ENCODE measurements at regions of chr14 and their contacts with region 1.

Region 1: DNA sequence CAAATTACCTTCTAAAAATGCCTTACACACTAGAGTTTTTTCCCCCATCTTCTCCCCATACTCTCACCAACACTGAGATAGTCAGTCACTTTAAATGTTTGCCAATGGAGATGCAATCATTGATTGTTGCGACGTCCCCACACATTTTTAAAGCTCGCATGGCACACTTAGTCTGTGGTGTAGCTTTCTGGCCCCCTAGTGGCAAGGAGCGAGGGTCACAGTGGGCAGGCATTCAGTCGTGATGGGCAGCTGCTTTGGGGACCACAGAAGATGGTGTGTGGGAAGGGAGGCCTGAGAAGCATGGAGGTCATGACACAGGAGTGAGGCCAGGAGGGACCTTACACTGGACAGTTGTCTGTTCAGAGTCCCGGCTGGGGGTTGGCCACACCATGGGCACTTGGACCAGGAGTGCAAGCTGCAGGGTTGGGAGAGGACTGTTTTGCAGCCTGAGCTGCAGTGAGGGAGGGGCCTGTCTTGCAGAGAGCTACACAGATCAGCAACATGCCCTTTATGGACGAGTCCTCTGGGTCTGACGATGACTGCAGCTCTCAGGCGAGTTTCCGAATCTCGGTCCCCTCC is 28.7 kb downstream of the PIGH start:
- DNase-seq: peak; percentile 71
- H3K4me3 Mint-ChIP-seq: no peak overlapping the region
- H3K27ac Mint-ChIP-seq: no peak overlapping the region
- H3K4me1 Mint-ChIP-seq: peaks cover 6% of the 10 kb centered on the region
- H3K27me3 Mint-ChIP-seq: no peaks in the 10 kb centered on the region

Region 2: DNA sequence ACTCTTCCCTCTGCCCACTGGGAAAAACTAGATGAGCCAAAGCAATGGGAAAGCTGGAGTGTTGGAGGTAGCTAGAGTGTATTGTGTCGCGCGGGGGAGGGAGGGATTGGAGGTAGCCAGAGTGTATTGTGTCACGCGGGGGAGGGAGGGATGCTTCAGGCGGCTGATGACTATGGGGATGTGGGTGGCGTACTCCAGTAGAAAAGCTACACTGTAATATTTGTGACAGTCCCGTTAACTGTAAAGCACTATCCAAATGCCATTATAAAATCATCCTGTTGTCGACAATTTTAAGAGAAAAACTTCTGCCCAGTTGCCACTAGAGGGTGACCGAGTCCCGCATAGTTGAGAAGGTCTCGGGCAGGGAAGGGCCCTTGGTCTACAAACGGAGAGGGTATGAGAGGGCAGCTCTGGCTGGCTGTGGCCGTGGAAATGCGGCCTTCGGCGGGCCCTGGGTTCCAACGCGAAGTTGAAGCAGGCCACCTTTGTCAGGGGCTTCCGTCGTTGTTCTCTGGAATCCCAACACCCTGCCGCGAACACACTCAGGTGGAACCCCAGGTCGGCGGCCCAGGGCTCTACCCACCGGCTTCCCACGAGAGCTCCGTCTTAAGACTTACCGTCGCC is 144.3 kb before region 1 on chr14:
- CTCF ChIA-PET with region 1: interaction called, 137 read pairs
- POLR2A ChIA-PET with region 1: interaction called, 5 read pairs
- DNase-seq: peak; percentile 76
- H3K4me3 Mint-ChIP-seq: no peak overlapping the region
- H3K27ac Mint-ChIP-seq: no peak overlapping the region
- H3K4me1 Mint-ChIP-seq: peaks cover 5% of the 10 kb centered on the region
- H3K27me3 Mint-ChIP-seq: peaks cover 37% of the 10 kb centered on the region

Region 3: GRCh38 chr14:67526676-67527459 is 44.5 kb before region 1 on chr14:
- CTCF ChIA-PET with region 1: interaction called, 42 read pairs
- POLR2A ChIA-PET with region 1: interaction called, 5 read pairs
- DNase-seq: peak; percentile 42
- H3K4me3 Mint-ChIP-seq: no peak overlapping the region
- H3K27ac Mint-ChIP-seq: no peak overlapping the region
- H3K4me1 Mint-ChIP-seq: no peaks in the 10 kb centered on the region
- H3K27me3 Mint-ChIP-seq: peaks cover 62% of the 10 kb centered on the region

Region 4: DNA sequence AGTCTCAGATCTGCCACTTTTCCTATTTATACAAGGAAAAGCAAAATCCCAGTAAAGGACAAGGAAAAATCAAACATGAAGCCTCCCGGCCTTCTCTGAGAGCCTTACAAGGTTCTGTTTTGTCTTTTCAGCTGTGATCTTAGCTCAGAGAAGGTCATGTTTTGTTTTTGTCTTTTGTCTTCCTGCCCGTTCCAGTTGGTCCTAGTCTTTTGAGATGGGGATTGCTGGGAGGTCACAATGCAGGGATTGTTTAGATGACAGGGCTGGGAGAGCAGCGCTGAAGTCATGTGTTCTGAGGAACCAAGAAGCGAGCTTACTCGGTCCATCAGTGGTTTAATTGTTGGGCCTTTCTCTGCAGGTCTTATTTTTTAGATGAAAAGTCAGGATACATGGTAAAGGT is 32.2 kb before region 1 on chr14:
- CTCF ChIA-PET with region 1: interaction called, 11 read pairs
- POLR2A ChIA-PET with region 1: no interaction called
- DNase-seq: no peak
- H3K4me3 Mint-ChIP-seq: no peak overlapping the region
- H3K27ac Mint-ChIP-seq: no peak overlapping the region
- H3K4me1 Mint-ChIP-seq: peaks cover 10% of the 10 kb centered on the region
- H3K27me3 Mint-ChIP-seq: peaks cover 47% of the 10 kb centered on the region

Region 5: GRCh38 chr14:67551940-67552339 is 19.4 kb before region 1 on chr14:
- CTCF ChIA-PET with region 1: interaction called, 11 read pairs
- POLR2A ChIA-PET with region 1: no interaction called
- DNase-seq: no peak
- H3K4me3 Mint-ChIP-seq: no peak overlapping the region
- H3K27ac Mint-ChIP-seq: no peak overlapping the region
- H3K4me1 Mint-ChIP-seq: no peaks in the 10 kb centered on the region
- H3K27me3 Mint-ChIP-seq: peaks cover 7% of the 10 kb centered on the region

Region 6: GRCh38 chr14:67583711-67584644 is 12.6 kb after region 1 on chr14:
- CTCF ChIA-PET with region 1: interaction called, 22 read pairs
- POLR2A ChIA-PET with region 1: interaction called, 3 read pairs
- DNase-seq: peak; percentile 26
- H3K4me3 Mint-ChIP-seq: no peak overlapping the region
- H3K27ac Mint-ChIP-seq: no peak overlapping the region
- H3K4me1 Mint-ChIP-seq: peaks cover 12% of the 10 kb centered on the region
- H3K27me3 Mint-ChIP-seq: no peaks in the 10 kb centered on the region